ENCODE measurements at regions of chr1 and their contacts with region 1.

Region 1: GRCh38 chr1:150532868-150533302 is 16.3 kb upstream of the ADAMTSL4 start:
- DNase-seq: no peak
- ATAC-seq: no peak

Region 2: GRCh38 chr1:150363426-150364230 is 169.3 kb before region 1 on chr1 and contains the start of gene RPRD2:
- intact Hi-C with region 1: loop called (anchors 5 kb)
- DNase-seq: peak; percentile 99
- ATAC-seq: peak; percentile 99
- total RNA-seq, gene RPRD2: 23.6 TPM

Region 3: GRCh38 chr1:150473659-150474058 is 59.2 kb before region 1 on chr1:
- intact Hi-C with region 1: no loop called
- DNase-seq: no peak
- ATAC-seq: peak; percentile 81

Region 4: DNA sequence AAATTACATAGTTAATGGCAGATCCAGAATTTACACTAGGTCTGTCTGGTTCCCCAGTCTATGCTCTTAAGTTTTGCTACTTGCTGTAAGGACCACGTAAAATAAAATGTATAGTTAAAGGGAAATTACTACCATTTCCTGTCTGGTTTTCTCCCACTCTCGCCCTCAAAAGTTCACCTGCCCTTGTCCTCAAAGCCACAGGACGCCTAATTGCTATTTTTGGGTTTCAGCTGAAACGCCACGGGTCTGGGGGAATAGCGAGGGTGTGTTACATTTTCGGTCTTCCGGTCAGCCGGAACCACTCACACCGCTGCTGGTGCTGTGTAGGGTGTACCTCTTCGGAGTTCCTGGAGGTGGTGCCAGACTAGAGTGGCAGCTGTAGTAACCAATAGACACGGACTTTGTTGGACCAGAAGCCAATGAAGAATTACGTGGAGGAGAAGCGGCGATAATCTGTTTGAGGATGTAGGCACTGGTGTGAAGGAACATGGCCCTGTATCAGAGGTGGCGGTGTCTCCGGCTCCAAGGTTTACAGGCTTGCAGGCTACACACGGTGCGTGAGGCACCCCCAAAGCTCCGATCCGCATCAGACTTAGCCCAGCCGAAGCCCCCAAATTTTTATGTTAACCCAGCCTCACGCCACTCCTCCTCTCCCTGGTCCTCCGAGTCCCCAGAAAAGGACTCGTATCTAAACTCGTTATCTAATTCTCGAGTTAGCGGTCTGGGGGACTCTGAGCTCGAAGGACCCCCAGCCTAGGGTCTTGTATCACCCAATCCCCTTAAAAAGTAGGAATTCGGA is 45.7 kb before region 1 on chr1 and contains the start of gene TARS2:
- intact Hi-C with region 1: loop called (anchors 2 kb)
- DNase-seq: peak; percentile 92
- ATAC-seq: peak; percentile 100
- total RNA-seq, gene TARS2: 29.6 TPM

Region 5: DNA sequence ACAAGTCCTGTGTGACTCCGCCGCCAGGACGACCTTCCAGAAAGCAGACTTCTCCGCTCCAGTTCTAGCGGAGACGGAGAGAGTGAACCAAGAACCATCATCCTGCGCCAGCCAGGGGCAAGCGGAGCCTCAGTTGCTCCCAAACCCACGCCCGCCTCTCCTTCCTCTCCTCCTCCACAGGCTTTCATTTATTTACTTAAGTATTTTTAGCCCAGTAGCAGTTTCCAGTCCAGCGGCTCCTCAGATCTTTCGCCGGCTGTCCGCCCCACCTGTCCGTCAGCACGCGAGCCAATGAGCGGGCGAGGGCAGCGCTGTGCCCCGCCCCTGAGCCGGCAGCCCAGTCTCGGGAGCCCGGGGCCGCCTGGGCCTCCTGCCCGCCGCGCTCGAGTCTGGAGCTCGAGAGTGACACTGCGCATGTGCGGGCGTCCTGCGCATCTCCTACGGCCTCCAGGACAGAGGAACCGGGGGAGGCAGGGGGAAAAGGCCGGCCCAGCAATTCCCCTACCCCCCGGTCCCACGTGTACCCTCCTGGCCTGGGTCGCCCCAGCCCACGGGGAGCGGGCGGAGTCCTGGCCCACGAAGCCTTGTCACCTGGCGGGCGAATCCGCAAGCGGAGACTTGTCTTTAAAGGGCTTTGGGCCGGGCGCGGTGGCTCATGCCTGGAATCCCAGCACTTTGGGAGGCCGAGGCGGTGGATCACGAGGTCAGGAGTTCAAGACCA is 17.4 kb before region 1 on chr1 and contains the start of gene FALEC:
- intact Hi-C with region 1: loop called (anchors 1 kb)
- DNase-seq: peak; percentile 99
- ATAC-seq: peak; percentile 98
- total RNA-seq, gene FALEC: not detected

Region 6: DNA sequence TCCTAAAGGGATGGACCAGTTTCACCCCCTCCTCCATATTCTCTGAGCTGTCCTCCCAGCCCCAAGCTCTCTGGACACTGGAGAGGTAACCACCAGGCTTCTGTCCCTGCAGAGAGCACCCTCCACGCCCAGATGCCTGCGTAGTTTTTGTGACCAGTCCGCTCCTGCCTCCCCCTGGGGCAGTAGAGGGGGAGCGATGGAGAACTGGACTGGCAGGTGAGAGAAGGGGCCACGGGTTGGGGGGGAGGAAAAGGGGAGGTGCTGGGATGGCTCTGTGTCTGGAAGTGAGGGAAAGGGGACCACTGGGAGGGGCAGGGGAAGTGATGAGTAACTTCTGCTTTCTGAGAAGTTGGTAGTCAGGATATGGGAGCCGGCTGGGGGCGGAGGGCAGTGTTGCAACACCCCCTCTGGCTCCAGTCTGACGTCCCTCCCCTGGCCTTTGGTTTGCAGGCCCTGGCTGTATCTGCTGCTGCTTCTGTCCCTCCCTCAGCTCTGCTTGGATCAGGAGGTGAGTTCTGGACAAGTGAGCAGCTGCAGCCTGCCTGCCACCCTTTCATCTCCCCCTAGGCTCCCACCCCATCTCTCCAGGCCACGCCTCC is 19.3 kb after region 1 on chr1:
- intact Hi-C with region 1: no loop called
- DNase-seq: peak; percentile 94
- ATAC-seq: peak; percentile 68

Measured in Right ventricle myocardium inferior (tissue), 1 donor.